CD14-positive monocyte (primary cell): ENCODE measurements at regions of chr5 and their contacts with region 1.

Region 1: DNA sequence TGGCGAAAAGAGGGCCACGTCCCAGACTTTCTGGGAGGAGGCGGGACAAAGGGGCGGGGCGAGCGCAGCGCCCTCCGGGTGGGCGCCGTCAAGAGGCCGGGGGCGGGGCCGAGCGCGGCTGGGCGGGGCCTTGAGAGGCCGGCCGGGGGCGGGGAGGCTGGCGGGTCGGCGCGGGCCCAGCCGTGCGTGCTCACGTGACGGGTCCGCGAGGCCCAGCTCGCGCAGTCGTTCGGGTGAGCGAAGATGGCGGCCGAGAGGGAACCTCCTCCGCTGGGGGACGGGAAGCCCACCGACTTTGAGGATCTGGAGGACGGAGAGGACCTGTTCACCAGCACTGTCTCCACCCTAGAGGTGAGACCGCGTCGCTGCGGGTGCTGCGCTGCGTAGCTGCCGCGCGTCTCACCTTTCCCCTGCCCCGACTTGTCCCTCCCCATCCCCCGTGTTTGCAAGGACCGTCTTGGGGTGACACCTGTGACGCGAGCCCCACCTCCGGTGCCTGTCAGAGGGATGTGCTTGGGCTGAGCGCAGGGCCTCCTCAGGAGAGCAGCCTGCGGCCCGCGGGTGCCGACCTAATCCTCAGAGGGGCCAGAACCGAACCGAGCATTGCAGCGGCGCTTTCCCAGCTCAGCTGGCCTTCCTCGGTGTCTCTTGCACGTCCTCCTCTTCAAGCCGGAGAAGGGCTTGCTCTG is at the start of gene SNX2:
- DNase-seq: peak; percentile 81 to 86 (median 86)
- H3K4me3 ChIP-seq: peak within 1 kb of the TSS; percentile 82 to 98 (median 97)
- H3K4me3 Mint-ChIP-seq: peak within 1 kb of the TSS; percentile 99 to 100
- H3K27ac ChIP-seq: peak within 1 kb of the TSS; percentile 98 to 99
- H3K27ac Mint-ChIP-seq: peak within 1 kb of the TSS; percentile 98 to 100 (median 99)
- H3K4me1 ChIP-seq: peaks cover 36 to 52% of the 10 kb centered on the region in 2 donors
- H3K4me1 Mint-ChIP-seq: peaks cover 49% of the 10 kb centered on the region
- H3K27me3 ChIP-seq: no peaks in the 10 kb centered on the region
- H3K27me3 Mint-ChIP-seq: peaks cover 0 to 5% (median 1%) of the 10 kb centered on the region in 3 donors
- CTCF ChIP-seq: no peak
- polyA plus RNA-seq, gene SNX2: 84.6 to 264 (median 263) TPM

Region 2: DNA sequence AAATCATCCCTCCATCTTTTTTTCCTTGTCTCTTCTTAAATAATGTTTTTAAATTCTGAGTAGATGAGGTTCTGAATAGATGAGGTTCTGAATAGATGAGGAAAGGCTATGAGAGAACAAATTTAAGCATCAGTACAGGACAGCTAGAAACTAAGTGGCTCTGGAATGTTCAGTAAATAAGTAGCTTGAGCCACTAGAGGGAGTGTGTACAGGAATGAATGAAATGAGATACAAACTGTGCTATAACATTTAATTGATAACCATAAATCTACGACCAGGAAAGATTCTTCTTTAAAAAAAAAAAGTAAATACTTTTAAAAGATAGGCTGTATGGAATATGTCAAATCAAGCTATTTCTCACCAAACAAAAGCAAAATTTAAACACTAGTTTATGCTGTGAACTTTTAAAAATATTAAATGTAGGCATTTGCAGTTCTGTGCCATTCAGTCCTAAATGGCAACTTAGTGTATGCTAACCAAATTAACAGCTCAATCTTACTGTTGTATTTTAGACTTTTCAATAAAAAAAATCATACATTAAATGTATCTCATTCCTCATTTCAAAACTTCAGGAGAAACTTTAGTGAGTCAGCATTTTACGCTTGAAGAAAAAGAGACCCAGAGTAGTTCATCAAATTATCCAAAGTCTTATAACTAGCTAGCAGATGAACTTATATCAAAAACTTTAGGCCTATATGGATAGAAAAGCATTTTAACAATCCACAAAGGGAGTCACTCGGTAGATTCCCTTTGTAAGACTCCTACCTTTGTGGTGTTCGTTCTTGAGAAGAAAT is 70.6 kb before region 1 on chr5:
- intact Hi-C with region 1: loop called in 1 of 2 experiments (anchors 10 kb)
- DNase-seq: peak; percentile 15 to 48 (median 20)
- H3K4me3 ChIP-seq: no peak overlapping the region
- H3K4me3 Mint-ChIP-seq: no peak overlapping the region
- H3K27ac ChIP-seq: no peak overlapping the region
- H3K27ac Mint-ChIP-seq: no peak overlapping the region
- H3K4me1 ChIP-seq: no peaks in the 10 kb centered on the region
- H3K4me1 Mint-ChIP-seq: peaks cover 4% of the 10 kb centered on the region
- H3K27me3 ChIP-seq: no peaks in the 10 kb centered on the region
- H3K27me3 Mint-ChIP-seq: peaks cover 0 to 1% (median 0%) of the 10 kb centered on the region in 3 donors
- CTCF ChIP-seq: peak; percentile 83

Region 3: GRCh38 chr5:122756263-122756911 is 18.6 kb before region 1 on chr5:
- intact Hi-C with region 1: no loop called
- DNase-seq: peak; percentile 81 to 94 (median 91)
- H3K4me3 ChIP-seq: peak overlapping the region in 1 of 3 experiments; percentile 45
- H3K4me3 Mint-ChIP-seq: peak overlapping the region in 1 of 2 donors; percentile 60
- H3K27ac ChIP-seq: peak overlapping the region; percentile 21 to 83
- H3K27ac Mint-ChIP-seq: peak overlapping the region; percentile 76 to 93 (median 88)
- H3K4me1 ChIP-seq: peaks cover 23 to 25% of the 10 kb centered on the region in 2 donors
- H3K4me1 Mint-ChIP-seq: peaks cover 24% of the 10 kb centered on the region
- H3K27me3 ChIP-seq: no peaks in the 10 kb centered on the region
- H3K27me3 Mint-ChIP-seq: peaks cover 1 to 2% (median 2%) of the 10 kb centered on the region in 3 donors
- CTCF ChIP-seq: no peak

Region 4: GRCh38 chr5:122835681-122836080 is 60.7 kb after region 1 on chr5:
- intact Hi-C with region 1: no loop called
- DNase-seq: no peak
- H3K4me3 ChIP-seq: no peak overlapping the region
- H3K4me3 Mint-ChIP-seq: no peak overlapping the region
- H3K27ac ChIP-seq: no peak overlapping the region
- H3K27ac Mint-ChIP-seq: no peak overlapping the region
- H3K4me1 ChIP-seq: peaks cover 4 to 7% of the 10 kb centered on the region in 2 donors
- H3K4me1 Mint-ChIP-seq: peaks cover 9% of the 10 kb centered on the region
- H3K27me3 ChIP-seq: no peaks in the 10 kb centered on the region
- H3K27me3 Mint-ChIP-seq: no peaks in the 10 kb centered on the region
- CTCF ChIP-seq: no peak